ENCODE measurements at regions of chr6 and their contacts with region 1.

Region 1: DNA sequence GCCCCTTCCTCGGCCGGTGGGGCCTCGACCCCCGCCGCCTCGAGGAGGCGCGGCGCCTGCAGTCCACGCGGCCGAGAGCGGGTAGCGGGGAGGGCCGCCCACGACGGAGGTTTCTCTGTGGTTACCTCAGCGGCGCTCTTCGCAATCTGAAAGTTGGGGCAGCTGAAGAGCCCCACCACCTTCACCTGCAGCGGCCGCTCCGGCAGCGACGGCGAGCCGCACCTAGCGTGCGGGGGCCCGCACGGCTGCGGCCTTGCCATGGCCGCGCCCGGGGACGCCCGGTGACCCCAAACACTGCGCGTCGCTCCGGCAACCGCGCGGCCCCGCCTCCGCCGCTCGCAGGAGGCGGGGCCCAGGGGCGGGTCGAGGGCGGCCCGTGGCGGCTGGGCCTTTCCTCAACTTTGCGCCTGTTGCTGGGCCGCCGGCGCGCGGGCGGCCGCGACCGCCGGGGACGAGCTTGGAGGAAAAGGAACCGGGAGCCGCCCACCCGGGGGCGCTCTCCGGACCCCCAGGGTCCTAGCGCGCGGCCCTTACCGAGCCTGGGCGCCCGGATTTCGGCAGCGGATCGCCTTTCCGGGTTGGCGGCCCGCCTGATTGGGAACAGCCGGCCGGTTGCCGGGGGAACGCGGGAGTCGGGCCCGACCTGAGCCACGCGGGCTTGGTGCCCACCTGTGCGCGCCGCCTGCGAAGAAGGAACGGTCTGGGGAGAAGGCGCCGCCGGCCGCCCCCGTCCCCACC is at the starts of genes PPIL6 and SMPD2:
- DNase-seq: peak; percentile 79
- H3K4me3 Mint-ChIP-seq: peak within 1 kb of the TSS; percentile 88
- H3K27ac Mint-ChIP-seq: peak within 1 kb of the TSS; percentile 91
- H3K4me1 Mint-ChIP-seq: peaks cover 23% of the 10 kb centered on the region
- H3K27me3 Mint-ChIP-seq: peaks cover 5% of the 10 kb centered on the region
- total RNA-seq, gene PPIL6: 0.13 and 0.29 TPM in 2 replicates
- total RNA-seq, gene SMPD2: 18.5 and 19.1 TPM in 2 replicates

Region 2: GRCh38 chr6:109318328-109318876 is 122.1 kb before region 1 on chr6:
- intact Hi-C with region 1: no loop called
- DNase-seq: no peak
- H3K4me3 Mint-ChIP-seq: no peak overlapping the region
- H3K27ac Mint-ChIP-seq: no peak overlapping the region
- H3K4me1 Mint-ChIP-seq: peaks cover 7% of the 10 kb centered on the region
- H3K27me3 Mint-ChIP-seq: peaks cover 3% of the 10 kb centered on the region

Region 3: DNA sequence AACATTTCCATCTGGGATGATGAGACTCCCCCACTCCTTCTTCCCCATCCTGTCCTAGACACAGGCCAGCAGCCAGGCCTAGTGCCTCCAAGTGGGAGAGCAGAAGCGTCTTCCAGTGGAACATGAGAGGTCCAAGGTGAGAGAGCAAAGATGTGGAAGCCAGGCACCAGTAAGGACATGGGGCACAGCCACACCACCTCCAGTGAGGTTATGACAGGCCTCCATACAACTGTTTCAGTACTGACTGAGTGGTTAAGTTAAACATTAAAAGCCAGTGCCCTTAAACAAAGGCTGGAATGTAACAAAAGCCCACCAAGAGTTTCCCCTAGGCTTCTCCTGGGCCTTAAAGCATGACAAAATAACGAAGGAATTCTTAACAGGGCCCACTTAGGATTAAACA is 37.2 kb after region 1 on chr6:
- intact Hi-C with region 1: loop called (anchors 1 kb)
- DNase-seq: no peak
- H3K4me3 Mint-ChIP-seq: peak overlapping the region; percentile 83
- H3K27ac Mint-ChIP-seq: peak overlapping the region; percentile 87
- H3K4me1 Mint-ChIP-seq: peaks cover 77% of the 10 kb centered on the region
- H3K27me3 Mint-ChIP-seq: no peaks in the 10 kb centered on the region

Measured in activated T-helper 1 cell treated with anti-CD3 and anti-CD28 coated beads, Interleukin-12 subunit alpha, Interleukin-12 subunit beta, Interleukin-2, Interleukin-4 antibody, amounts not matched to agents 30 ng/mL and 10 ng/mL and 1 ng/mL, durations not matched to agents 14 hours and 24 hours and 36 hours (primary cell).